ENCODE measurements at regions of chr16 and their contacts with region 1.

Region 1: GRCh38 chr16:234468-235305 is at the start of gene FAM234A:
- DNase-seq: peak; percentile 94 to 95 (median 95)
- H3K4me3 ChIP-seq: peak within 1 kb of the TSS; percentile 79 to 95 (median 94)
- H3K4me3 Mint-ChIP-seq: peak within 1 kb of the TSS; percentile 96 to 99
- H3K27ac ChIP-seq: peak within 1 kb of the TSS; percentile 100
- H3K27ac Mint-ChIP-seq: peak within 1 kb of the TSS; percentile 100
- H3K4me1 ChIP-seq: peaks cover 18 to 20% of the 10 kb centered on the region in 2 donors
- H3K4me1 Mint-ChIP-seq: peaks cover 13% of the 10 kb centered on the region
- H3K27me3 ChIP-seq: no peaks in the 10 kb centered on the region
- H3K27me3 Mint-ChIP-seq: peaks cover 0 to 6% (median 1%) of the 10 kb centered on the region in 3 donors
- CTCF ChIP-seq: peak; percentile 41
- polyA plus RNA-seq, gene FAM234A: 22.5 to 40.4 (median 25.1) TPM

Region 2: DNA sequence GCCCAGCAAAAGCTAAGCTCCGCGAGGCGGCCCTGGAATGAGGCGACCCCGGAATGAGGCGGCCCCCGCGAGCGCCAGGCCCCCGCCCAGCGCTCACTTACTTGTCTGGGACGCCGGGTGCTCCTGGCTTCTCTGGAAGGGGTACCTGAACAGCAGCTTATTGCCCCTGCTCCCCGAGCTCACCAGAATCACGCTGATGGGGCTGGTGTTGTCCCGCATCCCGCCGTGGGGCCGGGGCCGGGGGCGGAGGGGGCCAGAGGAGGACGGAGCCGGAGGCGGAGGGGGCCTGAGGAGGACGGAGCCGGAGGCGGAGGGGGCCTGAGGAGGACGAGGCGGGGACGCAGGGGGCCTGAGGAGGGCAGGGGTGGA is 96.7 kb before region 1 on chr16:
- intact Hi-C with region 1: loop called in 1 of 2 experiments (anchors 5 kb)
- DNase-seq: no peak
- H3K4me3 ChIP-seq: peak overlapping the region; percentile 52 to 78 (median 70)
- H3K4me3 Mint-ChIP-seq: peak overlapping the region; percentile 67 to 86
- H3K27ac ChIP-seq: peak overlapping the region in 1 of 2 donors; percentile 67
- H3K27ac Mint-ChIP-seq: peak overlapping the region in 4 of 7 donors; percentile 41 to 60 (median 56)
- H3K4me1 ChIP-seq: peaks cover 8 to 9% of the 10 kb centered on the region in 2 donors
- H3K4me1 Mint-ChIP-seq: peaks cover 14% of the 10 kb centered on the region
- H3K27me3 ChIP-seq: no peaks in the 10 kb centered on the region
- H3K27me3 Mint-ChIP-seq: peaks cover 0 to 8% (median 5%) of the 10 kb centered on the region in 3 donors
- CTCF ChIP-seq: no peak